ENCODE measurements at regions of chr4 and their contacts with region 1.

Region 1: DNA sequence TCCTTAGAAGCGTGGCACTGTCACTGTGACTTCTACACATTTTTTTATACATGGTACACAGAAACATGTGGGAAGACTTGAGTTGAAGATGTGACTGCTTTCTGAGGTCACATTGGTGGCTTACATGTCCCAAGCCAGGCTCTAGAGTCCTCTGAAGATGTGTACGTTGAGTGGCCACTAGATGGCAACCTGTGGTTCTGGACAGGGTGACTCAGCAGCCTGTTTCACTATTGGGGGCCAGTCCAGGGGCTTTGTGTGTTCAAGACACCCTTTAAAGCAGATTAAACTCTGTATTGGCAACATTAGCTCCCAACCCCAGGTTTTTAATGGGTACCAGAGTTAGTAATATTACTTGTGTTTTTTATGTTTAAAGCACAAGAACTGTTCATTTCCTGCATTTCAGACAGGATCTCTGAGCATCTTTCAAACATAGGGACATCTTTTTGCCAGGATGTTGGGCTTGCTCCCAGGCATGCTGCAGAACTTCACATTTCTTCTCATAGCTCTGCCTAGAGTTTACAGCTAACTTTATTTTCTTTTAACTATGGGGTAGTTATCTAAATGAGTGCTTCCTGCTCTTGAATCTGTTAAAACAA is 53.0 kb downstream of the DCUN1D4 start:
- DNase-seq: peak; percentile 46 to 78 (median 55)
- ATAC-seq: peak; percentile 95 to 96
- H3K4me3 ChIP-seq: no peak overlapping the region
- H3K27ac ChIP-seq: no peak overlapping the region
- H3K4me1 ChIP-seq: no peaks in the 10 kb centered on the region
- H3K27me3 ChIP-seq: no peaks in the 10 kb centered on the region

Region 2: GRCh38 chr4:51958199-51958968 is 62.5 kb after region 1 on chr4:
- intact Hi-C with region 1: no loop called
- DNase-seq: no peak
- ATAC-seq: no peak
- H3K4me3 ChIP-seq: no peak overlapping the region
- H3K27ac ChIP-seq: no peak overlapping the region
- H3K4me1 ChIP-seq: no peaks in the 10 kb centered on the region
- H3K27me3 ChIP-seq: no peaks in the 10 kb centered on the region

Region 3: GRCh38 chr4:52028969-52029368 is 133.1 kb after region 1 on chr4:
- intact Hi-C with region 1: loop called (anchors 5 to 10 kb)
- DNase-seq: no peak
- ATAC-seq: no peak
- H3K4me3 ChIP-seq: no peak overlapping the region
- H3K27ac ChIP-seq: no peak overlapping the region
- H3K4me1 ChIP-seq: no peaks in the 10 kb centered on the region
- H3K27me3 ChIP-seq: no peaks in the 10 kb centered on the region

Measured in right cardiac atrium (tissue), 5 donors.